ENCODE measurements at regions of chr1 and their contacts with region 1.

Region 1: GRCh38 chr1:172041742-172042141 is 200.4 kb downstream of the DNM3 start:
- DNase-seq: peak; percentile 72
- ATAC-seq: peak; percentile 48
- H3K4me3 ChIP-seq: no peak overlapping the region
- H3K27ac ChIP-seq: no peak overlapping the region
- H3K4me1 ChIP-seq: peaks cover 19% of the 10 kb centered on the region
- H3K27me3 ChIP-seq: no peaks in the 10 kb centered on the region
- CTCF ChIP-seq: peak; percentile 80

Region 2: GRCh38 chr1:170617591-170618330 is 1424.0 kb before region 1 on chr1:
- CTCF ChIA-PET with region 1: no interaction called
- POLR2A ChIA-PET with region 1: no interaction called
- intact Hi-C with region 1: no loop called
- DNase-seq: no peak
- ATAC-seq: no peak
- H3K4me3 ChIP-seq: no peak overlapping the region
- H3K27ac ChIP-seq: no peak overlapping the region
- H3K4me1 ChIP-seq: peaks cover 5% of the 10 kb centered on the region; the same call in 1 of the 2 replicates
- H3K27me3 ChIP-seq: no peaks in the 10 kb centered on the region
- CTCF ChIP-seq: no peak

Region 3: DNA sequence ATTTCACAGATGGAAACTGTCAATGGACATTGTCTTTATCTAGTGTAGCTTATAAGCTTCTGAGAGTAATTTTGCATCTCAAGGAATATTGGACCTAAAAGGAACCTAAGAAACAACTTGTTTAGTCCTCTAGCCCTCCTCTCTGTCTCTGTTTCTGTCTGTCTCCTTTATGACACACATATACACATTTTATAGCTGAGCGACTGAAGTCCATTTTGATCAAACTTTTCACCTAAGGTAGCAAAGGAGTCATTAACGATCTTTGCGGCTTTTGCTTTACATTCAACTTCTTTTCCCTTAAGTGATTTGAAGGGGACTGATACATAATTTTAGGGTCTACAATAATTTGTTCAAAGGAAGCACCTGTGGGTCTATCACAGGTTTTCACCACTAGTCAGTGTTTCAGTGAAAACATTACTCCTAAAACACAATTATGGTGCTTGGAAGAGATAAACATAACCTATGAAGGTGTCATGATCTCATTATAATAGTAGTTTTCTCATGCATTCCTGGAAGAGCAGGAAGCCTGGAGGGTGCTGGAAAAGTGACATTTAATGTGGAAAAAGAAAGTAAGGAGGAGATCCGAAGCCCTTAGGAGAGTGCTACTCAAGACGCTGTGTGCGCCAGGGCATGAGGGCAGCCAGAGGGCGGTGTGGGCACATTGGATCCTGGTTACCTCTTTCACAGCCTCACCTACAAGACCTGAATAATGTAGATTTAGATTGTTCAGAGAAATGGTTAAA is 48.2 kb after region 1 on chr1:
- CTCF ChIA-PET with region 1: no interaction called
- POLR2A ChIA-PET with region 1: no interaction called
- intact Hi-C with region 1: loop called (anchors 1 kb)
- DNase-seq: peak; percentile 94
- ATAC-seq: peak; percentile 100
- H3K4me3 ChIP-seq: peak overlapping the region; percentile 10; the same call in 1 of the 2 replicates
- H3K27ac ChIP-seq: no peak overlapping the region
- H3K4me1 ChIP-seq: no peaks in the 10 kb centered on the region
- H3K27me3 ChIP-seq: no peaks in the 10 kb centered on the region
- CTCF ChIP-seq: peak; percentile 100

Region 4: DNA sequence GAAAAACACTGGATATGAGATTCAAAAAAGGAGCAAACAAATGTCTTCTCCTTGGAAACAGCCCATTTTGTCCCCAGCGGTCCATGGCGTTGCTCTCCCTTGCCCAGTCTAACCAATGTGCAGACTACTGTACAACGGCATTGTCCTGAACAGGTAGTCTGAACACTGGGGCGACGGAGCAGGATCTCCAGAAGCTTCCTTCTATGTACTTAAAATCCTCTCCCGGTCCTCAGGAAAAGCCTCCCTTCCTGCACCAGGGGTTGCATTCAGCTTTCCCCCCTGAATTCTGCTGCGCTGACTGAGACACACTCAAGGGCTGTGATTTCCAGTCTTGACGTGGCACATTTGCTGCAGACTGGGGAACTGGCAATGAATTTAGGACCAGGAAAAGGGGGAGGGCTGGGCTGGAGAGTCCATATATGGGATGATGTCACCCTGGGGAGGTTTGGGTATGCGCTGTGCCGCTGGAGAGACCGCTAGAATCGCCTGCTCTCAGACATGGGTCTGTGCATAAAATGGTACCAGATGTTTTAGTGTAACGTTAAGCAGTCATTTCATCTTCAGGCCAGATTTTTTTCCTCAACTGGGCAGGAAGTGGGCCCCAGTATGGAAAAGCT is 102.8 kb after region 1 on chr1:
- CTCF ChIA-PET with region 1: interaction called, 4 read pairs
- POLR2A ChIA-PET with region 1: no interaction called
- intact Hi-C with region 1: loop called (anchors 5 kb)
- DNase-seq: no peak
- ATAC-seq: no peak
- H3K4me3 ChIP-seq: no peak overlapping the region
- H3K27ac ChIP-seq: no peak overlapping the region
- H3K4me1 ChIP-seq: peaks cover 36% of the 10 kb centered on the region
- H3K27me3 ChIP-seq: no peaks in the 10 kb centered on the region
- CTCF ChIP-seq: no peak

Region 5: DNA sequence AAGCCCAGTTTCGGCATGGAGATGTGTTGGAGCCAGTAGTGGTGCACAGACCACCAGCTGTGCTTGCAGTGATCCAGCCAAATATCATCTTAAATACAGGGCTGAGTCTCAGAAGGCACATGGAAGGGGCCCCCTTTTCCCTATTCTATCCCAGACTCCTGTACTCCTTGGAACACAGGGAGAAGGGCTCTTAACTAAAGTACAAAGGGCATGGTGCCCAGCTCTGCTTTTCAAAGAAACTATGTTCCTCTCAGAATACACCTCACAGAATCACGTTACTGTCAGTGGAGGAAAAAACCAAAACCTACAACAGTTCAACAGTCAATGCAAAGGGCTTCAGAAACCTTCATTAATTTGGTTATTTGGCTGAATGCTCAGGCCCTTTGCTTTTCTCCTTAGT is 198.2 kb after region 1 on chr1:
- CTCF ChIA-PET with region 1: no interaction called
- POLR2A ChIA-PET with region 1: no interaction called
- intact Hi-C with region 1: no loop called
- DNase-seq: no peak
- ATAC-seq: no peak
- H3K4me3 ChIP-seq: no peak overlapping the region
- H3K27ac ChIP-seq: no peak overlapping the region
- H3K4me1 ChIP-seq: no peaks in the 10 kb centered on the region
- H3K27me3 ChIP-seq: no peaks in the 10 kb centered on the region
- CTCF ChIP-seq: no peak

Region 6: GRCh38 chr1:172443626-172444453 is 402.1 kb after region 1 on chr1 and contains the start of gene PIGC:
- CTCF ChIA-PET with region 1: no interaction called
- POLR2A ChIA-PET with region 1: interaction called, 3 read pairs
- intact Hi-C with region 1: loop called (anchors 2 kb)
- DNase-seq: peak; percentile 99
- ATAC-seq: peak; percentile 76
- H3K4me3 ChIP-seq: peak within 1 kb of the TSS; percentile 75
- H3K27ac ChIP-seq: peak within 1 kb of the TSS; percentile 69
- H3K4me1 ChIP-seq: peaks cover 47% of the 10 kb centered on the region
- H3K27me3 ChIP-seq: no peaks in the 10 kb centered on the region
- CTCF ChIP-seq: peak; percentile 100
- total RNA-seq, gene PIGC: 57.5 and 70.5 TPM in 2 replicates

Measured in PC-3 (cell line).